ENCODE measurements at regions of chr11 and their contacts with region 1.

Region 1: GRCh38 chr11:9613118-9613829 is 39.8 kb downstream of the WEE1 start:
- DNase-seq: peak; percentile 93
- ATAC-seq: peak; percentile 65
- H3K4me3 Mint-ChIP-seq: peak overlapping the region; percentile 77
- H3K27ac Mint-ChIP-seq: peak overlapping the region; percentile 99
- H3K4me1 Mint-ChIP-seq: peaks cover 40% of the 10 kb centered on the region
- H3K27me3 Mint-ChIP-seq: no peaks in the 10 kb centered on the region
- CTCF ChIP-seq: peak; percentile 82

Region 2: GRCh38 chr11:9438611-9439010 is 174.7 kb before region 1 on chr11:
- CTCF ChIA-PET with region 1: no interaction called
- POLR2A ChIA-PET with region 1: no interaction called
- intact Hi-C with region 1: no loop called
- DNase-seq: no peak
- ATAC-seq: no peak
- H3K4me3 Mint-ChIP-seq: no peak overlapping the region
- H3K27ac Mint-ChIP-seq: no peak overlapping the region
- H3K4me1 Mint-ChIP-seq: no peaks in the 10 kb centered on the region
- H3K27me3 Mint-ChIP-seq: no peaks in the 10 kb centered on the region
- CTCF ChIP-seq: no peak

Region 3: GRCh38 chr11:9534791-9535781 is 78.2 kb before region 1 on chr11:
- CTCF ChIA-PET with region 1: interaction called, 34 read pairs
- POLR2A ChIA-PET with region 1: no interaction called
- intact Hi-C with region 1: loop called (anchors 1 kb)
- DNase-seq: peak; percentile 89
- ATAC-seq: peak; percentile 75
- H3K4me3 Mint-ChIP-seq: no peak overlapping the region
- H3K27ac Mint-ChIP-seq: no peak overlapping the region
- H3K4me1 Mint-ChIP-seq: no peaks in the 10 kb centered on the region
- H3K27me3 Mint-ChIP-seq: no peaks in the 10 kb centered on the region
- CTCF ChIP-seq: peak; percentile 83

Region 4: DNA sequence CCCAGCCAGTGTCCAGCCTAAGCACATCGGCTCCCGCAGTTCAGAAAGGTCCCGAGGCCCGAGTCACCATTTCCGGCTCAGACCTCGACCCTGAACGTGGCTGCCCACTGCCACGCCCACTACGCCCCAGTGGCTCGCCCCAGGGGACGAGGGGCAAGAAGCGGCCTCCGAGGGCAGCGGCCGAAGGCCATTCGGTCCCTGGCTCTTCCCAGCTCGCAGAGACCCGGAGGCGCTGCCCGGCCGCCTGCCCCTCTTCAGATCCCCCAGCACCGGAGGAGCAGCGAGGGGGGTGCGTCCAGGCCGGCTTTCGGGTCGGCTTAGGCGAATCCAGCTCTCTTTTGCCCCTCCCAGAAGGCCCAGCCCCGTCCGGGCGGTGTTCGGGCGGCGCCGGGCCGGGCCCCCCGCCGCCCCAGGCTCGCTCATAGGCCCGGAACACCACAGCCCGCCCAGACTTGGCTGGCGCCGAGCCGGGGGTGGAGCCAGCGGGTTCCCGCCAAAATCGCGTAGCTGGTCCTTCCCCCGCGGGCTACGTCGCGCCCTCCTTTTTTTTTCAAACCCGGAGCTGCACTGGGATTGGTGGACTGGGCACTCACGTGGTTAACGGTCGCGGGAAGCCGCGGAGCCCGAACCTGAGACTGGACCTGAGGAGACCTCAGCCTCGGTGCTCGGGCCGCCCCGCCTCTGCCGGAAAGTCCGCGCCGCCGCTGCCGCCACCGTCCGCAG is 40.1 kb before region 1 on chr11 and contains the start of gene WEE1:
- CTCF ChIA-PET with region 1: interaction called, 32 read pairs
- POLR2A ChIA-PET with region 1: interaction called, 31 read pairs
- intact Hi-C with region 1: no loop called
- DNase-seq: peak; percentile 98
- ATAC-seq: peak; percentile 96
- H3K4me3 Mint-ChIP-seq: peak within 1 kb of the TSS; percentile 83
- H3K27ac Mint-ChIP-seq: peak within 1 kb of the TSS; percentile 81
- H3K4me1 Mint-ChIP-seq: peaks cover 18% of the 10 kb centered on the region
- H3K27me3 Mint-ChIP-seq: peaks cover 8% of the 10 kb centered on the region
- CTCF ChIP-seq: no peak
- total RNA-seq, gene WEE1: 45.2 to 49.2 TPM

Region 5: GRCh38 chr11:9601037-9601875 is 12.0 kb before region 1 on chr11:
- CTCF ChIA-PET with region 1: interaction called, 45 read pairs
- POLR2A ChIA-PET with region 1: interaction called, 16 read pairs
- intact Hi-C with region 1: no loop called
- DNase-seq: peak; percentile 92
- ATAC-seq: peak; percentile 87
- H3K4me3 Mint-ChIP-seq: peak overlapping the region; percentile 60
- H3K27ac Mint-ChIP-seq: peak overlapping the region; percentile 87
- H3K4me1 Mint-ChIP-seq: peaks cover 31% of the 10 kb centered on the region
- H3K27me3 Mint-ChIP-seq: peaks cover 3% of the 10 kb centered on the region
- CTCF ChIP-seq: no peak

Region 6: GRCh38 chr11:9748361-9748970 is 135.2 kb after region 1 on chr11:
- CTCF ChIA-PET with region 1: interaction called, 49 read pairs
- POLR2A ChIA-PET with region 1: interaction called, 3 read pairs
- intact Hi-C with region 1: loop called (anchors 5 kb)
- DNase-seq: peak; percentile 79
- ATAC-seq: peak; percentile 98
- H3K4me3 Mint-ChIP-seq: no peak overlapping the region
- H3K27ac Mint-ChIP-seq: no peak overlapping the region
- H3K4me1 Mint-ChIP-seq: peaks cover 14% of the 10 kb centered on the region
- H3K27me3 Mint-ChIP-seq: no peaks in the 10 kb centered on the region
- CTCF ChIP-seq: peak; percentile 82

Region 7: GRCh38 chr11:9815486-9816136 is 202.3 kb after region 1 on chr11:
- CTCF ChIA-PET with region 1: no interaction called
- POLR2A ChIA-PET with region 1: no interaction called
- intact Hi-C with region 1: no loop called
- DNase-seq: no peak
- ATAC-seq: no peak
- H3K4me3 Mint-ChIP-seq: no peak overlapping the region
- H3K27ac Mint-ChIP-seq: no peak overlapping the region
- H3K4me1 Mint-ChIP-seq: no peaks in the 10 kb centered on the region
- H3K27me3 Mint-ChIP-seq: no peaks in the 10 kb centered on the region
- CTCF ChIP-seq: no peak

Region 8: GRCh38 chr11:10293423-10294289 is 680.4 kb after region 1 on chr11 and contains the start of gene SBF2:
- CTCF ChIA-PET with region 1: no interaction called
- POLR2A ChIA-PET with region 1: no interaction called
- intact Hi-C with region 1: loop called (anchors 10 kb)
- DNase-seq: peak; percentile 85
- ATAC-seq: peak; percentile 69
- H3K4me3 Mint-ChIP-seq: peak within 1 kb of the TSS; percentile 65
- H3K27ac Mint-ChIP-seq: peak within 1 kb of the TSS; percentile 22
- H3K4me1 Mint-ChIP-seq: peaks cover 32% of the 10 kb centered on the region
- H3K27me3 Mint-ChIP-seq: peaks cover 30% of the 10 kb centered on the region
- CTCF ChIP-seq: no peak
- total RNA-seq, gene SBF2: 10.0 to 11.0 TPM

Measured in activated CD8-positive, alpha-beta T cell treated with anti-CD3 and anti-CD28 coated beads for 36 hours (primary cell).